GM12878 (cell line): ENCODE measurements at regions of chr5 and their contacts with region 1.

Region 1: GRCh38 chr5:1737790-1738405 is 61.7 kb downstream of the MRPL36 start:
- DNase-seq: peak; percentile 11
- ATAC-seq: peak; percentile 99
- H3K4me3 ChIP-seq: no peak overlapping the region
- H3K27ac ChIP-seq: no peak overlapping the region
- H3K4me1 ChIP-seq: no peaks in the 10 kb centered on the region
- H3K27me3 ChIP-seq: peaks cover 0 to 2% of the 10 kb centered on the region in 2 experiments; a peak in 1 of 4 replicates
- CTCF ChIP-seq: peak; percentile 64 to 77 (median 77); a peak in 5 of 6 replicates
- EP300 ChIP-seq: no peak
- POLR2A ChIP-seq: no peak
- RAD21 ChIP-seq: peak; percentile 71

Region 2: DNA sequence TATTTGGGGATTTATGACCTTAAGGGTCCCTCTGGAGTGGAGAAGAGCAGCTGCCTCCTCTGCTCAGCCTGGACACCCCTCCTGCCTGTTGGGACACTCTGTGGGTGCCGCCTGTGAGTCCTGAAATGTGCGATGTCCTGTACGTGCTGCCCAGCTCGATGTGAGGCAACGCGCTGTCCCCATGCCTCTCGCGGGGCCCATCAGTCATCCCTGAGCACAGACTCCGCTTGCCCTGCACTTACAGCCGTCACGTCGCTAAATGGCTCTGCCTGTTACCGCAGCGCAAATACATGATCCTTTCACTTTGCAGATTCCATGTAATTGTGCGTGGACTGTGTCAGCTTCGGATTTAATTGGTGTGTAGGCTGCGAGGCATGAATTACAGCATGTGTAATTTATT is 117.7 kb after region 1 on chr5:
- CTCF ChIA-PET with region 1: no interaction called
- POLR2A ChIA-PET with region 1: no interaction called
- RAD21 ChIA-PET with region 1: no interaction called
- SMC1A ChIA-PET with region 1: no interaction called
- in situ Hi-C with region 1: no loop called
- intact Hi-C with region 1: no loop called
- DNase-seq: no peak
- ATAC-seq: no peak
- H3K4me3 ChIP-seq: no peak overlapping the region
- H3K27ac ChIP-seq: no peak overlapping the region
- H3K4me1 ChIP-seq: no peaks in the 10 kb centered on the region
- H3K27me3 ChIP-seq: no peaks in the 10 kb centered on the region; a peak in 3 of 4 replicates
- CTCF ChIP-seq: no peak
- EP300 ChIP-seq: no peak
- POLR2A ChIP-seq: no peak
- RAD21 ChIP-seq: no peak

Region 3: GRCh38 chr5:2017540-2018389 is 279.9 kb after region 1 on chr5:
- CTCF ChIA-PET with region 1: interaction called, 5 read pairs
- POLR2A ChIA-PET with region 1: no interaction called
- RAD21 ChIA-PET with region 1: no interaction called
- SMC1A ChIA-PET with region 1: no interaction called
- in situ Hi-C with region 1: loop called (anchors 5 kb)
- intact Hi-C with region 1: loop called (anchors 5 kb)
- DNase-seq: no peak
- ATAC-seq: peak; percentile 55; the same call in 2 of the 3 replicates
- H3K4me3 ChIP-seq: no peak overlapping the region
- H3K27ac ChIP-seq: no peak overlapping the region
- H3K4me1 ChIP-seq: no peaks in the 10 kb centered on the region
- H3K27me3 ChIP-seq: no peaks in the 10 kb centered on the region; a peak in 1 of 4 replicates
- CTCF ChIP-seq: peak; percentile 46 to 54 (median 50)
- EP300 ChIP-seq: no peak
- POLR2A ChIP-seq: no peak
- RAD21 ChIP-seq: peak; percentile 58

Region 4: DNA sequence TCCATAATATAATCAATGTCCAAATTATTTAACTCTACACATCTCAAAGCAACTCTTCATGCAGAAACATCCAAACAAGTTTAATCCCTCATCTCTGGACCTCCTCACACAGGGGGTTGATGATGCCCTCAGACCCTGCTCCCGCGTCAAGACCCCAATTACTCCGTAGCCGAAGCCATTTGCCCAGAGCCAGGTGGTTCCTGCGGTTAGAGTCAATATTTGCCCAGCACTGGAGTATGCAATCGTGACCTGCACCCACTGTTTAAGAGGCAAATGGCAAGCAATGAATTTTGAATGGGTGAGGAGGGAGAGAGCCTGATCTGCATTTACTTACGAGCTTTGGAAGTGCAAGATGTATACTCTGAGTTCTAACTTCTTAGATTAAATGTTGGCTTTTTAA is 416.8 kb after region 1 on chr5:
- CTCF ChIA-PET with region 1: no interaction called
- POLR2A ChIA-PET with region 1: no interaction called
- RAD21 ChIA-PET with region 1: no interaction called
- SMC1A ChIA-PET with region 1: no interaction called
- in situ Hi-C with region 1: no loop called
- intact Hi-C with region 1: loop called (anchors 5 kb)
- DNase-seq: no peak
- ATAC-seq: no peak
- H3K4me3 ChIP-seq: no peak overlapping the region
- H3K27ac ChIP-seq: no peak overlapping the region
- H3K4me1 ChIP-seq: no peaks in the 10 kb centered on the region
- H3K27me3 ChIP-seq: no peaks in the 10 kb centered on the region
- CTCF ChIP-seq: no peak
- EP300 ChIP-seq: no peak
- POLR2A ChIP-seq: no peak
- RAD21 ChIP-seq: no peak